Mammary epithelial cell (primary cell): ENCODE measurements at regions of chr14 and their contacts with region 1.

Region 1: DNA sequence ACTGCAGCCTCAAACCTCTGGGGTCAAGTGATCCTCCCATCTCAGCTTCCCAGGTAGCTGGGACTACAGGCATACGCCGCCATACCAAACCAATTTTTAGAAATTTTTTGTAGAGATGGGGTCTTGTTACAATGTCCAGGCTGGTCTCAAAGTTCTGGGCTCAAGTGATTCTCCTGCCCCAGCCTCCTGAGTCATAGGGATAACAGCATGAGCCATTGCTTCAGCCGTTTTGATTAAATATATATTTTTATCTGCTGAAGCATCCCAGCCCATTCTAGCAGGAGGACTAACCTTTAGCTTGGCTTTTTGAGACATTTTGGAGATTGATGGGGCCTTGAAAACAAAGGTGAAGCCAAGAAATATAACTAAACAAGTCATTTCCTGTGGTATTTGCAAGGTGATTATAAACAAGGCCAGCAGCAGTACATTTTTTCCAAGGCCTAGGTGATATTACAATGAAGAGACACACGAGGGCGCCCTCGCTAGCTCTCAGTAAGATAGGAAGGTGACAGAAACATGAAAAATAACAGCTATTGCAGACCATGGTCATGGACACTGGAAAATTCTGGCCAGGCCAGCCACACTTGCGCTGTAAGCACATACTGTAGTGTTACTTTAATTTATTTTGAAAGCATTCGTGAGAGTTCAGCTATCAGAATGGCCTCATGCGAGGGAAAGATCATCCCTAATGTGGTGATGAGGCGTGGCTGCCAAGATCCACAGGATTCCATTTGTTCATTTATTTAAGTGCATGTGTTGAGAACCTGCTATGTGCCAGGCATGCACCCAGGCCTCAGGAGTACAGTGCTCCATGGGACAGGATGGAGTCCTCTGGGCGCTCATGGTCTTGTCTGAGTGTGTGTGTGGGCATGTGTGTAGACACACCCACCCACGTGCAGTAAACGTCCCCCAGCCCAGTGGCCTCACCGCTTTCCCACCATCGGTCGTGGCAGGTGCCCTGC is 63.5 kb downstream of the DGLUCY start:
- DNase-seq: peak; percentile 55
- H3K4me3 ChIP-seq: no peak overlapping the region
- H3K27ac ChIP-seq: no peak overlapping the region
- H3K4me1 ChIP-seq: no peaks in the 10 kb centered on the region
- H3K27me3 ChIP-seq: no peaks in the 10 kb centered on the region
- CTCF ChIP-seq: peak; percentile 75 to 89

Region 2: GRCh38 chr14:90883782-90884181 is 293.6 kb before region 1 on chr14:
- CTCF ChIA-PET with region 1: interaction called, 15 read pairs
- dilution Hi-C with region 1: no loop called
- in situ Hi-C with region 1: no loop called
- intact Hi-C with region 1: no loop called
- DNase-seq: peak; percentile 68
- H3K4me3 ChIP-seq: no peak overlapping the region
- H3K27ac ChIP-seq: peak overlapping the region; percentile 89
- H3K4me1 ChIP-seq: peaks cover 15% of the 10 kb centered on the region
- H3K27me3 ChIP-seq: no peaks in the 10 kb centered on the region
- CTCF ChIP-seq: no peak

Region 3: GRCh38 chr14:91140672-91141071 is 36.7 kb before region 1 on chr14:
- CTCF ChIA-PET with region 1: interaction called, 4 read pairs
- dilution Hi-C with region 1: no loop called
- in situ Hi-C with region 1: no loop called
- intact Hi-C with region 1: loop called (anchors 1 kb)
- DNase-seq: peak; percentile 59
- H3K4me3 ChIP-seq: no peak overlapping the region
- H3K27ac ChIP-seq: no peak overlapping the region
- H3K4me1 ChIP-seq: peaks cover 7% of the 10 kb centered on the region
- H3K27me3 ChIP-seq: no peaks in the 10 kb centered on the region
- CTCF ChIP-seq: peak; percentile 71 to 81

Region 4: DNA sequence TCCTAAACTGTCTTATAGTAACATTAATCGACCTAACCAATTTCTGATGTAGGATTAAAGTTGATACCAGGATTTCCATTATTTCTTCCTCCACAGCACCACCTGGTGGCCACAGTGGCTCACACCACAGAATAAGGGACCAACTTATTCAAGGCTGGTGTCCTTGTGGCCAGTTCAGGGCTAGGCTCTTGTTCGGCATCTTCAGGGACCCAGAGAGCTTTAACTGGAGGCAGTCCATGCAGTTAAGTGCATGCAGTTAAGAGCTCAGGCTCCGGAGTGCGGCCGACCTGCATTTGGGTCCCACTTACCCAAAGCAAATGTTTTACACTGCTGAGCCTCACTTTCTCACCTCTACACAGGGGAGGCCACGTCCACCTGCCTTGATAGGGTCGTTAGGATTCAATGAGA is 109.2 kb after region 1 on chr14:
- CTCF ChIA-PET with region 1: interaction called, 8 read pairs
- dilution Hi-C with region 1: loop called (anchors 25 kb)
- in situ Hi-C with region 1: loop called (anchors 5 kb)
- intact Hi-C with region 1: loop called (anchors 1 kb)
- DNase-seq: peak; percentile 64
- H3K4me3 ChIP-seq: no peak overlapping the region
- H3K27ac ChIP-seq: no peak overlapping the region
- H3K4me1 ChIP-seq: peaks cover 23% of the 10 kb centered on the region
- H3K27me3 ChIP-seq: no peaks in the 10 kb centered on the region
- CTCF ChIP-seq: peak; percentile 83 to 94

Region 5: DNA sequence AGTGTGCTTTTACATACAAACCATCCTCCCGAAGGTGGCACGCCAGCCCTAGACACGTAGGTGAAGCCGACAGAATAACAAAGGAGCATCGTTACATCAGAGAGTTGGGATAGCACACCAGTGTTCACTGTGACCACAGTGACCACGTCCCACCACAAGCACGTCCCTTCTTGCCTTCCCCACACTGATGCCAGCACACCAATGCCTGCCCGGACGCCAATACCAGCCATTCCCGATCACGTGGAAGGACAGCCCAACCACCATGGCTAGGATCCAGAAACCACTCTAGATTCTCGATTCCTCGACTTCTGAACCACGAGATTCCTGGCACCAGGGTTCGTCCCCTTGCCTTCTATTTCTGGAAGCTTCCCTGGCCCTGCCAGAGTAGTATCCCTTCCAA is 115.1 kb after region 1 on chr14:
- CTCF ChIA-PET with region 1: interaction called, 14 read pairs
- dilution Hi-C with region 1: loop called (anchors 25 kb)
- in situ Hi-C with region 1: loop called in 1 of 2 experiments (anchors 5 kb)
- intact Hi-C with region 1: no loop called
- DNase-seq: peak; percentile 91
- H3K4me3 ChIP-seq: no peak overlapping the region
- H3K27ac ChIP-seq: no peak overlapping the region
- H3K4me1 ChIP-seq: peaks cover 15% of the 10 kb centered on the region
- H3K27me3 ChIP-seq: peaks cover 7% of the 10 kb centered on the region
- CTCF ChIP-seq: no peak